ENCODE measurements at regions of chr17 and their contacts with region 1.

Region 1: GRCh38 chr17:27236717-27237315 is 57.1 kb upstream of the WSB1 start:
- DNase-seq: peak; percentile 87
- ATAC-seq: no peak
- H3K4me3 Mint-ChIP-seq: no peak overlapping the region
- H3K27ac Mint-ChIP-seq: no peak overlapping the region
- H3K4me1 Mint-ChIP-seq: peaks cover 15% of the 10 kb centered on the region
- H3K27me3 Mint-ChIP-seq: no peaks in the 10 kb centered on the region

Region 2: DNA sequence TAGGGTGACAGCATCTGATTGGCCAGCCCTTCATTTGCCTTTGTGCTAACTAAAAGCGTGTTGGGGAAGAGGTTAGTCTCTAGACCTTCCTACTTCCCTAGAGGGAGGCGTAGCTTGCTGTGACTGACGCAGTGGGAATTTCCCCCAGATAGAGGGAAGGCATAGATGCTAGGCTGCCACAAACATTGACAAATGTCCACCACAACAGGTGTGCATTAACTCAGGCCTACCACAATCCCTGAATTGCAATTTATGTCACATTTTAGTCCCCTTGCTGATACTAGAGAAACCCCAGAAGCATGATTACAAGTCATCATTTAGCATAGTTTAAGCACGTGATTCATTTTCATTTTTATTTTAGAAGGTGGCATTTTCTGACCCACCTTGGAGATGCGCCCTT is 19.2 kb before region 1 on chr17:
- CTCF ChIA-PET with region 1: interaction called, 11 read pairs
- POLR2A ChIA-PET with region 1: no interaction called
- intact Hi-C with region 1: no loop called
- DNase-seq: no peak
- ATAC-seq: no peak
- H3K4me3 Mint-ChIP-seq: no peak overlapping the region
- H3K27ac Mint-ChIP-seq: no peak overlapping the region
- H3K4me1 Mint-ChIP-seq: peaks cover 12% of the 10 kb centered on the region
- H3K27me3 Mint-ChIP-seq: peaks cover 2% of the 10 kb centered on the region

Region 3: DNA sequence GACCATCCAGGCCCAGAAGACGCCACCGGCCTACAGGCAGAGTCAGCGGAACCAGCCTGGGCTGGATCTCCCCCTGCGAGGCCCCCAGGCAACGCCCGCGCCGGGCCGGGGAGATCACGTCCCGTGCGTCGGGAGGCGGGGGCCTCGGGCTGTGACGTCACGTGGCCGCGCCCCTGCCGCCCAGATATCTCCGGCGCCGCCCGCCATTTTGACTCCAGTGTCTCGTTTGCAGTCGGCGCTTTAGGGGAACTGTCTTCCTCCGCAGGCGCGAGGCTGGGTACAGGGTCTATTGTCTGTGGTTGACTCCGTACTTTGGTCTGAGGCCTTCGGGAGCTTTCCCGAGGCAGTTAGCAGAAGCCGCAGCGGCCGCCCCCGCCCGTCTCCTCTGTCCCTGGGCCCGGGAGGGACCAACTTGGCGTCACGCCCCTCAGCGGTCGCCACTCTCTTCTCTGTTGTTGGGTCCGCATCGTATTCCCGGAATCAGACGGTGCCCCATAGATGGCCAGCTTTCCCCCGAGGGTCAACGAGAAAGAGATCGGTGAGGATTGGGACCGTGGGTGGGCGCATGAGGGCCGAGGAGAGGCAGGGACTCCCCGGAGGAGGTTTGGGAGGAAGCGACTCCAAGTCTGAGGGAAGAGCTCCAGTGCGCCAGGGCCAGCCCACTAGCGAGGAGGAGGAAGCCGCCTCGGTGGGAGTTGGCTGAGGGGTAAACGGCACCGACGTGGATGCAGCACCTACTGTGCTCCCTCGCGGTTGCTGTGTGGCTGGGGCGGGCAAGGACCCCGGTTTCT is 57.3 kb after region 1 on chr17 and contains the start of gene WSB1:
- CTCF ChIA-PET with region 1: interaction called, 45 read pairs
- POLR2A ChIA-PET with region 1: interaction called, 9 read pairs
- intact Hi-C with region 1: loop called (anchors 1 to 2 kb)
- DNase-seq: peak; percentile 96
- ATAC-seq: peak; percentile 86
- H3K4me3 Mint-ChIP-seq: peak within 1 kb of the TSS; percentile 89
- H3K27ac Mint-ChIP-seq: peak within 1 kb of the TSS; percentile 99
- H3K4me1 Mint-ChIP-seq: peaks cover 32% of the 10 kb centered on the region
- H3K27me3 Mint-ChIP-seq: no peaks in the 10 kb centered on the region
- total RNA-seq, gene WSB1: 145 to 190 TPM

Region 4: GRCh38 chr17:27353461-27354050 is 116.7 kb after region 1 on chr17:
- CTCF ChIA-PET with region 1: interaction called, 12 read pairs
- POLR2A ChIA-PET with region 1: interaction called, 3 read pairs
- intact Hi-C with region 1: loop called in 1 of 2 experiments (anchors 1 kb)
- DNase-seq: peak; percentile 94
- ATAC-seq: peak; percentile 90
- H3K4me3 Mint-ChIP-seq: peak overlapping the region; percentile 85
- H3K27ac Mint-ChIP-seq: peak overlapping the region; percentile 95
- H3K4me1 Mint-ChIP-seq: peaks cover 25% of the 10 kb centered on the region
- H3K27me3 Mint-ChIP-seq: no peaks in the 10 kb centered on the region

Region 5: DNA sequence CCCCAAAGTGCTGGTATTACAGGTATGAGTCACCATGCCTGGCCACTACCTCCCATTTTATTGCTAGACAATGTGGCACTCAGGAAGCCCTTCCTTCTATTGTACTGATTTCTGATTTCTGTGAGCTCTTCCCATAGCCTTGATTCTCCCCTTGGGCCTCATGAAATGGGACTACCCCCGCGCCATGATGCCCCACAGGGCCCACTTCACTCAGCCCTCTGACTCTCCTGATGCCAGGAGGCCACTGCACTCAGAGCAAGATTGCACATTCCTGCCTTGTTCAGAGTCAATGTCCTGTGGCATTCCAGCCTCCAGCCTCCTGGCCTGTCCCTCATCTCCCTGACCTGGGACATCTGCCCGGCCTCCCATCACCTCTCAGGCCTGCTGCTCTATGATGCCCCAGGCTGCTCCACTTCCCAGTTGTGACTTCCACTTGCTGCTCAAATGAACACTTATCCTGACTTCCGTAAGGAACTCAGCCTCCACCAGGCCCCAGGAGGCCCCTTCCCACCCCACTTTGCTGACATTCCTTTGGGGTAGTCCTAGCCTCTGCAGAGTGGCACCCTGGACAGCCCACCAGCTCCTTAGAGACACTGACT is 152.8 kb after region 1 on chr17:
- CTCF ChIA-PET with region 1: interaction called, 12 read pairs
- POLR2A ChIA-PET with region 1: no interaction called
- intact Hi-C with region 1: no loop called
- DNase-seq: no peak
- ATAC-seq: no peak
- H3K4me3 Mint-ChIP-seq: no peak overlapping the region
- H3K27ac Mint-ChIP-seq: no peak overlapping the region
- H3K4me1 Mint-ChIP-seq: peaks cover 10% of the 10 kb centered on the region
- H3K27me3 Mint-ChIP-seq: peaks cover 12% of the 10 kb centered on the region

Region 6: GRCh38 chr17:27609611-27610303 is 372.9 kb after region 1 on chr17:
- CTCF ChIA-PET with region 1: interaction called, 72 read pairs
- POLR2A ChIA-PET with region 1: no interaction called
- intact Hi-C with region 1: loop called in 1 of 2 experiments (anchors 10 kb)
- DNase-seq: peak; percentile 47
- ATAC-seq: no peak
- H3K4me3 Mint-ChIP-seq: no peak overlapping the region
- H3K27ac Mint-ChIP-seq: no peak overlapping the region
- H3K4me1 Mint-ChIP-seq: peaks cover 21% of the 10 kb centered on the region
- H3K27me3 Mint-ChIP-seq: no peaks in the 10 kb centered on the region